Psoas muscle (tissue), 8 donors: ENCODE measurements at regions of chr17 and their contacts with region 1.

Region 1: GRCh38 chr17:68457539-68458259 is 403 bp upstream of the WIPI1 start:
- DNase-seq: peak; percentile 99 to 100
- ATAC-seq: peak; percentile 72 to 88 (median 82)
- H3K4me3 ChIP-seq: peak overlapping the region; percentile 87
- H3K27ac ChIP-seq: peak overlapping the region; percentile 98
- H3K4me1 ChIP-seq: peaks cover 62% of the 10 kb centered on the region
- H3K27me3 ChIP-seq: no peaks in the 10 kb centered on the region
- CTCF ChIP-seq: no peak

Region 2: DNA sequence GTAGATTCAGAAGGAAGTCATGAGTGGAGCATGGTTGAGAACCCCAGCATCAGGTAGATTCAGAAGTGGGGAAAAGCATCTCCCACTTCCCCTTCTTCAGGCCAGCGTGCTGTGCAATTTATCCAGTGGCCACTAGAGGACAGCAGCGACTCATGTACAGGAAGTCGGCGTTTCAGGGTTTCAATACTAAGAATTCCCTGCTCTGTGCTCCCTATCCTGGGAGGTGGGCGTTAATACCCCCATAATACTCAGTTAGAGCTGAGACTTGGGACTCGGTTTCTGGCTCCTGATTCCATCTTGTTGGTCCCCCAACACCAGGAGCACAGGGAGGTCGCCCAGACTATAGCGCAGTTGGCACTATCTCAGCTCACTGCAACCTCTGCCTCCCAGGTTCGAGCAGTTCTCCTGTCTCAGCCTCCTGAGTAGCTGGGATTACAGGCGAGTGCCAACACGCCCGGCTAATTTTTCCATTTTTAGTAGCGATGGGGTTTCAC is 285.2 kb before region 1 on chr17:
- intact Hi-C with region 1: loop called (anchors 2 kb)
- DNase-seq: peak; percentile 61 to 80
- ATAC-seq: peak; percentile 83 to 90 (median 86)
- H3K4me3 ChIP-seq: no peak overlapping the region
- H3K27ac ChIP-seq: no peak overlapping the region
- H3K4me1 ChIP-seq: no peaks in the 10 kb centered on the region
- H3K27me3 ChIP-seq: no peaks in the 10 kb centered on the region
- CTCF ChIP-seq: peak; percentile 98

Region 3: DNA sequence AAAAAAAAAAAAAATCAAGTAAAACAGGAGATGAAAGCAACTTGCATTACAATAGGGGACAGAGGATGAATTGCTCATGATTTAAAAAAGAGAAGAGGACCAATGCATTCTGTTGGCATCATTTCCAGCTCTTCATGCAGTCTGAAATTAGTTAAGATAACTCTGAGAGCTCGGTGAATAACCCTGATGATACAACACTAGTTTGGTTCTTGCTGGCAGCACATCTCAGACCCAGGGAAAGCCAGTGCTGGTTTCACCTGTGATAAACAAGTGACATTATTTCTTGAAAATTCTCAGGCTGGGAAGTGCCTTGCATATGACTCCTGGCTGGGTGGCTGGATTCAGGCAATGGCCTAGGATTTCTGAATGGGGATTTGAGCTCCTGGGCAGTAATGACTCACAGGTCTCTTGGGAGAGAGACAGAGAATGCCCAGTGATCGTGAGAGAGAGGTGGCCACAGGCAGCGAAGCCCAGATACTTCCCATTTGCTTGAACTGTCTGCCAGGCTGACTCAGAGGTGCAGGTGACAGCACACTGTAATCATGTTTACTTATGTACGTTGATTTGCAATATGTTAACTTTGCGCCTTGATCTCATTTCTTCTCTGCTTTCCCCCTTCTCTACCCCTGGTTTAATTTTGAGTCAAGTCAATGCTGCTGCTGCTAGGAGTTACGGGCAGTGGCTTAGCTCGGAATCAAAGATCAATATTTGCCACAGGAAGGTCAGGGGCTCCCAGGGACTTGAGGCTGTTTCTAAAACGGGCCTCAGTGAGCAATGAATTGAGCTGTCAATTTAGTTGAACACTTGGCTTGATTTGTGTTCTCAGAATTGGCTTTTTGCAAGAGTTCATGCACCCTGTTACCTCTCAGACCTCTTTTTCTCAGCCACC is 139.4 kb before region 1 on chr17:
- intact Hi-C with region 1: loop called in 1 of 2 experiments (anchors 5 kb)
- DNase-seq: peak; percentile 55 to 84
- ATAC-seq: peak; percentile 88 to 91 (median 90)
- H3K4me3 ChIP-seq: peak overlapping the region; percentile 10
- H3K27ac ChIP-seq: peak overlapping the region; percentile 99
- H3K4me1 ChIP-seq: peaks cover 37% of the 10 kb centered on the region
- H3K27me3 ChIP-seq: no peaks in the 10 kb centered on the region
- CTCF ChIP-seq: no peak

Region 4: DNA sequence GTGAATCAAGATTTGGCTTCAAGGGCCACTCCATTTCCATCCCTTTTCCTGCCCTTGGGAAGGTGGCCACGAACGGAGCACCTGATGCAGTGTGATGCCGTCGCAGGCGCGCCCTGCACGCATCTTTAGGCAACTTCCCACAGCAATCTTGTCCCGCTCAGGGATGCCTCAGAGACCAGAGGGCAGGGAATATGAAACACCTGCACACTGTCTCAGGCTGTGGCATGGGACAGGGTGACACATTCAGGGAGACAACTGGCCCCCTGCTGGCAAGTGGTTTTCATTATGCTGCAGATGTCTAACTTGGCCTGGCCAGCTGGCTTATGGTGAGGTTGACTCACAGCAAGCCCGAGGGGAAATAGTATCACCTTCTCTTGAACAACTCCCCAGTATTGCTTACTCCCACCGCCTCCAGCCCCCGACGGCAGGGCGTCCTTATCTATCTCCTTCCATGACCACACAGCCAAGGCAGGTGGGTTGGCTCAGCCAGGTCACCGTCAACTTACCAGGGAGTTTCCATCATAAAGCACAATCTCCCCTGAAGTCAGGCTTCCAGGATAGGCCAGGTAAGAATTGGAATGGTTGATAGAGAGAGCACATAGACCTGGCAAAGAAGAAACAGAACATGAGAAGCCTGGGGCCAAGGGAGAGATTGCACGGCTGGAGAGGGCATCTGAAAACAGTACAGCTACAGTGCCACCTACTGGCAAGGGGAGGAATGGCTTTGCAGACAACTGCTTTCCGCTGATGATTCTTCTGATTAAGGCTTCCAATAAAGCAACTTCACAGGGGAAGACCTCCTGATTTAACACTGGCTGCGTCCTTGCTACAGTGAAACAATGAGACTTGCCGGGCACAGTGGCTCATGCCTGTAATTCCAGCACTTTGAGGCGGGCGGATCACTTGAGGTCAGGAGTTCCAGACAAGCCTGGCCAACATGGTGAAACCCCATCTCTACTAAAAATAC is 21.5 kb before region 1 on chr17:
- intact Hi-C with region 1: loop called in 1 of 2 experiments (anchors 2 kb)
- DNase-seq: peak; percentile 79 to 87
- ATAC-seq: peak; percentile 81 to 85 (median 83)
- H3K4me3 ChIP-seq: peak overlapping the region; percentile 7
- H3K27ac ChIP-seq: peak overlapping the region; percentile 87
- H3K4me1 ChIP-seq: peaks cover 47% of the 10 kb centered on the region
- H3K27me3 ChIP-seq: no peaks in the 10 kb centered on the region
- CTCF ChIP-seq: peak; percentile 90

Region 5: GRCh38 chr17:68556556-68556955 is 98.9 kb after region 1 on chr17:
- intact Hi-C with region 1: no loop called
- DNase-seq: no peak
- ATAC-seq: no peak
- H3K4me3 ChIP-seq: no peak overlapping the region
- H3K27ac ChIP-seq: no peak overlapping the region
- H3K4me1 ChIP-seq: no peaks in the 10 kb centered on the region
- H3K27me3 ChIP-seq: no peaks in the 10 kb centered on the region
- CTCF ChIP-seq: no peak